ENCODE measurements at regions of chr6 and their contacts with region 1.

Region 1: DNA sequence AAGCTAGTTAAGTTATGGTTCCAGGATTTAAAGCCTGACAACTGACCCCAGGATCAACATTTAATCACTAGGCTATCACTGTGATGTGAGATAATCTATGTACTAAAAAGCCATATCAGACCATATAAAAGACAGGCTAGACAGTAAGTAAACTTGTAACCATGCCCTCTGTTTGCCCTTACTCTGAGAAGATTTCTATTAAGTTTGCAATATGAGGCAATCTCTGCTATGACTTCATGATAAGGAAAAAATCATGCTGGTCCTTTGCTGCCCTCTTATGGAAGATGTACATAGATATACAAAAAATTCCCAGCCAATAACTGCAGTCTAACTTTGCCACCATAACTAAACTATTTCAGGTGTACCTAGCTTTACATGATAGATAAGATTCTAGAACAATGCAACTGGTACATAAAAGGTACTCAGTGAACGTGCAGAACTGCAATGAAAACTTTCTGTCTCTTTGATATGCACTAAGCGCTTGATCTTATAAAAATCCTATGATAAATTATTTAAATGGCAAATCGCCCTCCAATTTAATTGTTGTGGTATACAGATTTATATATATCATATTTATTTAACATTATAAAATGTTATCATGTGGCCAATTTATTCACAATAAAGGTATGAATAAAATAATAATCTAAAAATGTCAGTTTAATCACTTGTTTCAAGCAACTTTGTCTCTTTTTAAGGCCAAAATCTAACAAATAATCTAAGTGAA is 70.5 kb downstream of the FAM217A start:
- DNase-seq: no peak
- ATAC-seq: peak; percentile 86 to 94 (median 88)
- H3K4me3 ChIP-seq: no peak overlapping the region
- H3K27ac ChIP-seq: peak overlapping the region; percentile 62
- H3K4me1 ChIP-seq: peaks cover 18% of the 10 kb centered on the region
- H3K27me3 ChIP-seq: no peaks in the 10 kb centered on the region
- CTCF ChIP-seq: peak; percentile 63

Region 2: GRCh38 chr6:3939964-3940363 is 68.5 kb before region 1 on chr6:
- intact Hi-C with region 1: loop called in 1 of 2 experiments (anchors 10 kb)
- DNase-seq: no peak
- ATAC-seq: no peak
- H3K4me3 ChIP-seq: no peak overlapping the region
- H3K27ac ChIP-seq: no peak overlapping the region
- H3K4me1 ChIP-seq: peaks cover 4% of the 10 kb centered on the region
- H3K27me3 ChIP-seq: peaks cover 0 to 2% (median 0%) of the 10 kb centered on the region in 3 donors
- CTCF ChIP-seq: no peak